Activated naive CD4-positive, alpha-beta T cell treated with anti-CD3 and anti-CD28 coated beads for 36 hours (primary cell): ENCODE measurements at regions of chr1 and their contacts with region 1.

Region 1: GRCh38 chr1:248906009-248906752 is at the start of gene PGBD2:
- DNase-seq: peak; percentile 97
- H3K4me3 Mint-ChIP-seq: peak within 1 kb of the TSS; percentile 92
- H3K27ac Mint-ChIP-seq: peak within 1 kb of the TSS; percentile 97
- H3K4me1 Mint-ChIP-seq: peaks cover 14% of the 10 kb centered on the region
- H3K27me3 Mint-ChIP-seq: no peaks in the 10 kb centered on the region
- total RNA-seq, gene PGBD2: 3.0 to 3.5 TPM

Region 2: DNA sequence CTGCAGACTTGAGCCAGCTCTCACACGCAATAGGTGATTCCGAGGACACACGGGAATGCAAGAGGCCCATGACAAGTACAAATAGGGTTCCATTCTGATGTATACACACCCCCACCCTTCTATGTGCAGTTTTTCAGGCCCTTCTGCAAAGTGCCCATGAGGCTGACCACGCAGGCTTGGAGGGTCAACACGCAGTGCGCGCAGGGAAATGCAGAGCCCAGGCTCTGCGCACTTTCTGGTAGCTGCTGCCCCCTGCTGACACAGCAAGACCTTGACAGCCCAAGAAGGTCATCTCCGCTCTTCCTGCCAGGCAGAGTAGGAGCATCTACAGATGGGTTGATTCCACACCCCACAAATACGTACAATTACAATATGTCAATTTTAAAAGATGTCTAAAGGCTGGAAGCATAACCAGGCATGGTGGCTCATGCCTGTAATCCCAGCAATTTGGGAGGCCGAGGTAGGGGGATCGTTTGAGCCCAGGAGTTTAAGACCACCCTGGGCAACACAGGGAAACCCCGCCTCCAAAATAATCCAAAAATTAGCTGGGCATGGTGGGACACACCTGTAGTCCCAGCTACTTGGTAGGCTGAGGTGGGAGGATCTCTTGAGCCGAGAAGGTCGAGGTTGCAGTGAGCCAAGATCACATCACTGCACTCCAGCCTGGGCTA is 99.0 kb before region 1 on chr1:
- CTCF ChIA-PET with region 1: no interaction called
- intact Hi-C with region 1: no loop called
- DNase-seq: peak; percentile 77
- H3K4me3 Mint-ChIP-seq: no peak overlapping the region
- H3K27ac Mint-ChIP-seq: no peak overlapping the region
- H3K4me1 Mint-ChIP-seq: peaks cover 9% of the 10 kb centered on the region
- H3K27me3 Mint-ChIP-seq: no peaks in the 10 kb centered on the region

Region 3: GRCh38 chr1:248837794-248838356 is 68.3 kb before region 1 on chr1 and contains the start of gene ZNF672:
- CTCF ChIA-PET with region 1: interaction called, 3 read pairs
- intact Hi-C with region 1: loop called (anchors 1 kb)
- DNase-seq: peak; percentile 96
- H3K4me3 Mint-ChIP-seq: no peak within 1 kb of the TSS
- H3K27ac Mint-ChIP-seq: no peak within 1 kb of the TSS
- H3K4me1 Mint-ChIP-seq: peaks cover 22% of the 10 kb centered on the region
- H3K27me3 Mint-ChIP-seq: peaks cover 2% of the 10 kb centered on the region
- total RNA-seq, gene ZNF672: 51.6 to 53.4 TPM

Region 4: GRCh38 chr1:248858891-248859889 is 47.0 kb before region 1 on chr1 and contains the start of gene ZNF692:
- CTCF ChIA-PET with region 1: interaction called, 3 read pairs
- intact Hi-C with region 1: loop called (anchors 1 kb)
- DNase-seq: peak; percentile 97
- H3K4me3 Mint-ChIP-seq: peak within 1 kb of the TSS; percentile 94
- H3K27ac Mint-ChIP-seq: peak within 1 kb of the TSS; percentile 93
- H3K4me1 Mint-ChIP-seq: peaks cover 65% of the 10 kb centered on the region
- H3K27me3 Mint-ChIP-seq: no peaks in the 10 kb centered on the region
- total RNA-seq, gene ZNF692: 87.6 to 88.7 TPM

Region 5: DNA sequence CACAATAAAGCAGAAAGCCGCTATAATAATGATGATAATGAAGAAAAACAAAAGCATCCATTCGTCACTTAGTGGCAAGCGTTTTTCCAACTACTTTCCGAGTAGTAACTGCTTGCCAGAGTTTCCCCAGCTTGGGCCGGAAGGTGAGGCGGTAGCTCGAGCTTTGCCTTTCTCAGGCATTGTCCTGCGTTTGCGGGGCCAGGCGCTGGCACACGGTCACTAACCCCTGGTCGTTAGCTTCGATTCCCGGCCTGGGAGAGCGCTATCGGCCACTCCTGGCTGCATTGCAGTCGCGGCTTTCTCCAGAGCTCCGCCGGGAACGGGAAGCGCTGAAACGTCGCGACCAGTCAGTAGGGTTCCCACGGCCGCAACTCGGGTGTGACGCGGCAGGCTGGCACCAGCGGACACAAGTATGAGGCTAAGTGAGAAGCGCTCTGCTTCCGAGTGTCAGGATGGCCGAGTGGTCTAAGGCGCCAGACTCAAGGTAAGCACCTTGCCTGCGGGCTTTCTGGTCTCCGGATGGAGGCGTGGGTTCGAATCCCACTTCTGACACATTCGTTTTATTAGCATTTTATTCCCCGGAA is 32.7 kb before region 1 on chr1:
- CTCF ChIA-PET with region 1: no interaction called
- intact Hi-C with region 1: loop called (anchors 1 kb)
- DNase-seq: peak; percentile 96
- H3K4me3 Mint-ChIP-seq: peak overlapping the region; percentile 85
- H3K27ac Mint-ChIP-seq: peak overlapping the region; percentile 93
- H3K4me1 Mint-ChIP-seq: peaks cover 16% of the 10 kb centered on the region
- H3K27me3 Mint-ChIP-seq: peaks cover 3% of the 10 kb centered on the region

Region 6: GRCh38 chr1:248890549-248891498 is 15.4 kb before region 1 on chr1:
- CTCF ChIA-PET with region 1: no interaction called
- intact Hi-C with region 1: loop called (anchors 2 kb)
- DNase-seq: no peak
- H3K4me3 Mint-ChIP-seq: no peak overlapping the region
- H3K27ac Mint-ChIP-seq: no peak overlapping the region
- H3K4me1 Mint-ChIP-seq: no peaks in the 10 kb centered on the region
- H3K27me3 Mint-ChIP-seq: peaks cover 2% of the 10 kb centered on the region

Region 7: DNA sequence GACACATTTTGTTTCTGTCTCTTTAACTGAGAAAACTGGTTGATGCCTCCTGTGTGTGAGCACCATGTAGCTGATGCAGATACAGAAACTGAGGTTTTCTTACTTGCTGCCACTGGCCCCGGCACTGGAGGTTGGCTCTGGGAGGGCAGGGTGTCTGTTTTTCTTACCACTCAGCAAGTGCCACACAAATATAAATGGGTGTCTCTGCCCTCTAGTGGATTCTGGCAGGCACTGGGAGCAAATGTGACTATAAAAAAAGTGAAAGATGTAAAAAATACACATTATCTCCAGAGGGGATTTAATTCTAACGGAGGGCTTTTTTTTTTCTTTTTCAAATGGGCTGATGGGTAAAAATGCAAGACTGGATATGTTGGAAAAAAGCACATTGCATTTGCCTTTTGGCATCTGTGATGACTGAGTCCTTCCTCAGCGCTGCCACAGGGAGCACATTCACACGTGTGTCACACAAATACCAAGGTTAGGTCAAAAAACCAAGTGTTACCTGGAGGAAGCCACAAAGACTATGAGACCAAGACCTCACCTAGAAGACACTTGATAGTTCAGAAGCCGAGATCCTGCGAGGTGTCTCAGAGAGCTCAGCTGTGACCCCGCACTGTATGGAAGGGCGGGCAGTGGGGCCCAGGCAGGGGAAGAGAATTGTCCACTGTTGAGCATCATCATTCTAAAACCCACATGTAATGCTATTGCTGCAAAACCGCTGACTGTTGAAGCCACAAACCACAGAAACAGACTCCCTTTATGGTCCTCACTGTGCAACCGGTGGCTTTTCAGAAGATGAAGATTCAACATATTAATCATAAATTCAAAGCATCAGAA is 18.7 kb after region 1 on chr1:
- CTCF ChIA-PET with region 1: no interaction called
- intact Hi-C with region 1: loop called (anchors 1 kb)
- DNase-seq: peak; percentile 75
- H3K4me3 Mint-ChIP-seq: no peak overlapping the region
- H3K27ac Mint-ChIP-seq: no peak overlapping the region
- H3K4me1 Mint-ChIP-seq: peaks cover 8% of the 10 kb centered on the region
- H3K27me3 Mint-ChIP-seq: no peaks in the 10 kb centered on the region